ENCODE measurements at regions of chr7 and their contacts with region 1.

Region 1: GRCh38 chr7:94907026-94907810 is at the start of gene PPP1R9A:
- DNase-seq: no peak
- H3K4me3 ChIP-seq: peak within 1 kb of the TSS; percentile 64 to 77
- H3K27ac ChIP-seq: peak within 1 kb of the TSS; percentile 59 to 60
- H3K4me1 ChIP-seq: no peaks in the 10 kb centered on the region
- H3K27me3 ChIP-seq: no peaks in the 10 kb centered on the region
- CTCF ChIP-seq: peak in 1 of 3 experiments; percentile 25
- total RNA-seq, gene PPP1R9A: 0.85 TPM

Region 2: GRCh38 chr7:94975336-94975735 is 68.1 kb after region 1 on chr7:
- intact Hi-C with region 1: loop called (anchors 5 kb)
- DNase-seq: no peak
- H3K4me3 ChIP-seq: no peak overlapping the region
- H3K27ac ChIP-seq: no peak overlapping the region
- H3K4me1 ChIP-seq: peaks cover 0 to 15% of the 10 kb centered on the region in 2 donors
- H3K27me3 ChIP-seq: no peaks in the 10 kb centered on the region
- CTCF ChIP-seq: no peak

Region 3: GRCh38 chr7:95199779-95200558 is 292.8 kb after region 1 on chr7:
- intact Hi-C with region 1: loop called (anchors 10 kb)
- DNase-seq: peak in 1 of 2 donors; percentile 63
- H3K4me3 ChIP-seq: no peak overlapping the region
- H3K27ac ChIP-seq: no peak overlapping the region
- H3K4me1 ChIP-seq: no peaks in the 10 kb centered on the region
- H3K27me3 ChIP-seq: no peaks in the 10 kb centered on the region
- CTCF ChIP-seq: peak; percentile 29 to 65 (median 63)

Region 4: DNA sequence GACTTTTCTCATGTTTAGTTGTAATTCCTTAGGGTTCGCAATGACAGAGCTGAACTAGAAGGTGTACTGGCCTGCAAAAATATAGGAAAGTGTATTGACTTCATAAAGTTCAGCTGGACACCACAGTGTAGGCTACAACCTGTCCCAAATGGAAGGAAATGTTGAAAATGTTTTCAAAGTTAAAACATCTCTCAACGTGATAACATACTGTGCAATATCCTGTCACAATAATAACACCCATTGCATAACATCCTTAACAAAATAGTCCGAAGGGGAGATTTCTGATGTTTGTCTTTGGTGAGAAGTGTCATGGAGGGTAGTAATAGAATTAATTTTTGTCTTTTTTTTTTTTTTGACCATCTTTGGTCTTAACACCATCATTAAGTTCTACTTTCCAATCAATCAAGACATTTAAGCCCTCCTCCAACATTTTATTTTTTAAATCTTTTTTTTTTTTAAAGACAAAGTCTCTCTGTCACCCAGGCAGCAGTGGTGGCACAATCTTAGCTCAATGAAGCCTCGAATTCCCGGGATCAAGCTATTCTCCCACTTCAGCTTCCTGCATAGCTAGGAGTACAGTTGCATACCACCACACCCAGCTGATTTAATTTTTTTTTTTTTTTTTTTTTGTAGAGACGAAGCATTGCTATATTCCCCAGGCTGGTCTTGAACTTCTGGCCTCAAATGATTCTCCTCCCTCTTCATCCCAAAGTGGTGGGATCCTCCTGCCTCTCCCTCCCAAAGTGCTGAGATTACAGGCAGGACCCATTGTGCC is 910.8 kb after region 1 on chr7:
- intact Hi-C with region 1: no loop called
- DNase-seq: no peak
- H3K4me3 ChIP-seq: no peak overlapping the region
- H3K27ac ChIP-seq: no peak overlapping the region
- H3K4me1 ChIP-seq: no peaks in the 10 kb centered on the region
- H3K27me3 ChIP-seq: no peaks in the 10 kb centered on the region
- CTCF ChIP-seq: no peak

Region 5: DNA sequence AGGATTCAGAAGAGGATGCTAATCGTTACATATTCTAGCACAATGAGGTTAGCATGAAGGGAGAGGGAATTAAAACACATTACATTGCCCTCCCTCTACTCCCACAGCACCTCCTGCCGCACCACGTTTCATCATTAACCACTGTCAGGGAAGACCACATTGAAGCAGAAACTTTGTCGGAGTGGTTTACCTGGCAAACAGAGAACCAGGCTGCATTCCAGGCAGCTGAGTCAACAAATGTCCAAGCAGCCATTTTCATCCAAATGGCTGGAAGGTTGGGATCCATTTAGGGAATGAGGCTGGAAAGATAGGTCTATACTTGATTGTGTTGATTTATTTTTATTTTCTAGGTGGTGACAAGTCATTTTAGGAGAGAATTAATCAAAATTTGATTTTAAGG is 1138.7 kb after region 1 on chr7:
- intact Hi-C with region 1: no loop called
- DNase-seq: no peak
- H3K4me3 ChIP-seq: no peak overlapping the region
- H3K27ac ChIP-seq: no peak overlapping the region
- H3K4me1 ChIP-seq: no peaks in the 10 kb centered on the region
- H3K27me3 ChIP-seq: no peaks in the 10 kb centered on the region
- CTCF ChIP-seq: no peak

Measured in ascending aorta (tissue), 2 donors.